K562 (cell line): ENCODE measurements at regions of chr6 and their contacts with region 1.

Region 1: DNA sequence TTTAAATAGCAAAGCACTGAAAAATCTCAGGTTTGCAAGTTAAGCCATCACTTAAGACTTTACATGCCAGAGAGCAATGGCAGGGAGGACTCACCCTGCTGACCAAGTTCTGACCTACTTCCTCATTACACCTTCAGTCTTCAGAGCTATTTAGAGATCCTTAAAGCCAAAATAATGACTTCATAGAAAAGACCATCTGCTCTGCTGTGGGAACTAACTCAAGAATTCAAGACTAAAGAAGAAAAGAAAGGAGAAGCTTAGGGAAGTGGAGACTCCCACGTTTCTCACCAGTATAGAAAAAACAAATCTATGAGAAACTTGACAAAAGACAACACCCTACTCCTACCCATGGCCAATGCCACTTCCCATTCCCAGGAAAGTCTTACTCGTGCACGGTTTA is 28.6 kb downstream of the XPO5 start:
- DNase-seq: no peak
- ATAC-seq: no peak
- H3K4me3 ChIP-seq: no peak overlapping the region
- H3K27ac ChIP-seq: no peak overlapping the region
- H3K4me1 ChIP-seq: no peaks in the 10 kb centered on the region
- H3K27me3 ChIP-seq: no peaks in the 10 kb centered on the region
- CTCF ChIP-seq: no peak
- EP300 ChIP-seq: no peak
- POLR2A ChIP-seq: no peak
- RAD21 ChIP-seq: no peak

Region 2: DNA sequence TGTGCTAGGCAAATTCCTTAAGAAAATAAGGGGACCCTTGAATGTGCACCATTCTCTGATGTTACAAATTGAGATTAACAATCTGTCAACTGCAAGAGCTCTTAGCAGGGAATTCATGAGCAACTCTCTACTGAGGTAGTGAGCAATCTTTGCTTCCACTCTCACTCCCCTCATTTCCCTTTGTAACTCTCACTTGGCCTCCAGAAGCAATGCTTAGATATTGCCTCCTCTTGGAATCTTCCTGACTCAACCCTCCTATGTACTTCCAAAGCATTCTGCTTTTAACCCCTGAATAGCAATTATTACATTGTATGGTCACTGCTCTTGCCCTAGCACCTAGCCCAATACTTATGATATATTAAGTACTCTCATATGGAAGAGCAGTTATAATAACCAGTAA is 12.1 kb after region 1 on chr6:
- CTCF ChIA-PET with region 1: no interaction called
- POLR2A ChIA-PET with region 1: interaction called, 6 read pairs
- in situ Hi-C with region 1: no loop called
- intact Hi-C with region 1: loop called (anchors 2 kb)
- DNase-seq: no peak
- ATAC-seq: no peak; the same call in 2 of the 3 replicates
- H3K4me3 ChIP-seq: no peak overlapping the region
- H3K27ac ChIP-seq: no peak overlapping the region
- H3K4me1 ChIP-seq: no peaks in the 10 kb centered on the region
- H3K27me3 ChIP-seq: no peaks in the 10 kb centered on the region
- CTCF ChIP-seq: no peak
- EP300 ChIP-seq: no peak
- POLR2A ChIP-seq: no peak
- RAD21 ChIP-seq: no peak